Activated CD4-positive, alpha-beta T cell treated with anti-CD3 and anti-CD28 coated beads, Interleukin-2, amount 10 ng/mL, durations not matched to agents 24 days and 14 days (primary cell): ENCODE measurements at regions of chr22 and their contacts with region 1.

Region 1: GRCh38 chr22:36331306-36331911 is 56.4 kb downstream of the MYH9 start:
- DNase-seq: peak; percentile 94
- H3K4me3 Mint-ChIP-seq: peak overlapping the region; percentile 88
- H3K27ac Mint-ChIP-seq: peak overlapping the region; percentile 99
- H3K4me1 Mint-ChIP-seq: peaks cover 92% of the 10 kb centered on the region
- H3K27me3 Mint-ChIP-seq: no peaks in the 10 kb centered on the region

Region 2: GRCh38 chr22:36311386-36312358 is 19.7 kb before region 1 on chr22:
- intact Hi-C with region 1: no loop called
- DNase-seq: no peak
- H3K4me3 Mint-ChIP-seq: no peak overlapping the region
- H3K27ac Mint-ChIP-seq: no peak overlapping the region
- H3K4me1 Mint-ChIP-seq: peaks cover 4% of the 10 kb centered on the region
- H3K27me3 Mint-ChIP-seq: no peaks in the 10 kb centered on the region

Region 3: GRCh38 chr22:36365020-36365411 is 33.6 kb after region 1 on chr22:
- intact Hi-C with region 1: loop called (anchors 1 kb)
- DNase-seq: peak; percentile 95
- H3K4me3 Mint-ChIP-seq: peak overlapping the region; percentile 79
- H3K27ac Mint-ChIP-seq: peak overlapping the region; percentile 89
- H3K4me1 Mint-ChIP-seq: peaks cover 83% of the 10 kb centered on the region
- H3K27me3 Mint-ChIP-seq: no peaks in the 10 kb centered on the region

Region 4: DNA sequence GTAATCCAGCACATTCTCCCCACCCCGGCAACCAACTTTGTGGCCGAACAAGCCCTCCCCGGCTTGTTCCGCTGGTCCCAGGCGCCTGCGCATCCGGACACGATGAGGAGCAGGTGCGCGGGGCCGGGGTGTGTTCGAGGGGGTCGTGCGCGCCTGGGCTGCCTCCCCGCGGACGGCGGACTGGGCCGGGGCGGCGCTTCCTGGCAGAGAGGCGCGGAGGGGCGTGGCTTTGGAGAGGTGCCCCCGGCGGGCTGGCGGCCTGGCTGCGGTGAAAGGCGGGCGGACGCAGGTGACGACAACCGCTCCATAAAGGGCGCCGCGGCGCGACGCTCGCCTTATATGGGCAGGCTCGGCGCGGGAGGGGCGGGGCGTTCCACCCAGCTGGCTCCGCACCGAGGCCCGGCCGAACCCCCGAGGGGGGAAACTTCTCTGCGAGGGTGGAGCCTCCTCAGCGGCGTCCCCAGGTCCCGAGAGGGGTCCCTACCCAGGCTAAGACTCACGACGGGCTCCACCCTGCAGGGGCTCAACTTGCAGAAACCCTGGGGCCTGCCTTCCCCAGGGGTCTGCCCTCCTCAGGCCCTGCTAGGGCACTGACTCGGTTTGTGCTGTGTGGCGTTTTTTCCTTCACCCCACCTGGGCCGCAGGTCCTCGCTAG is 123.6 kb after region 1 on chr22:
- intact Hi-C with region 1: loop called (anchors 2 kb)
- DNase-seq: peak; percentile 98
- H3K4me3 Mint-ChIP-seq: peak overlapping the region; percentile 71
- H3K27ac Mint-ChIP-seq: peak overlapping the region; percentile 77
- H3K4me1 Mint-ChIP-seq: peaks cover 41% of the 10 kb centered on the region
- H3K27me3 Mint-ChIP-seq: no peaks in the 10 kb centered on the region

Region 5: GRCh38 chr22:36470162-36470993 is 139.0 kb after region 1 on chr22:
- intact Hi-C with region 1: loop called (anchors 1 kb)
- DNase-seq: peak; percentile 95
- H3K4me3 Mint-ChIP-seq: peak overlapping the region; percentile 23
- H3K27ac Mint-ChIP-seq: peak overlapping the region; percentile 48
- H3K4me1 Mint-ChIP-seq: peaks cover 22% of the 10 kb centered on the region
- H3K27me3 Mint-ChIP-seq: no peaks in the 10 kb centered on the region

Region 6: GRCh38 chr22:36757668-36758211 is 426.3 kb after region 1 on chr22:
- intact Hi-C with region 1: no loop called
- DNase-seq: peak; percentile 93
- H3K4me3 Mint-ChIP-seq: no peak overlapping the region
- H3K27ac Mint-ChIP-seq: no peak overlapping the region
- H3K4me1 Mint-ChIP-seq: no peaks in the 10 kb centered on the region
- H3K27me3 Mint-ChIP-seq: peaks cover 4% of the 10 kb centered on the region